ENCODE measurements at regions of chr6 and their contacts with region 1.

Region 1: DNA sequence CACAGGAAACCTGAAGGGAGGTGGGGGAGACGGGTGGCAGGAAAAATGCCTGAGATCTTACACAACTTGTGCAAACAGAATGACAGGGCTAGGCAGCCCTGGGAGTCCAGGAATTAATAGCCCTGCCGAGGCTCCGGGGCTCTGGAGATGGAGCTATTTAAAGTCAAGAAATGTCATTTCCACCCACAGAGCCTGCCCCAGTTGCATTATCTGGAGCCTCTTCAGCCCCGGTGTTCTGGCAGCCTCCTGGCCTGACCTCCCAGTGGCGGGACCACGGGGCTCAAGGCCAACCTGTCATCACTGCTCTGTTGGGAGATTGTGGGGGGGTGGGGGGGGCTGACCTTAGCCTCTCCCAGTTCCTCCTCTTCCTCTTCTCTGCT is 28.5 kb upstream of the SCUBE3 start:
- DNase-seq: peak; percentile 57 to 60
- H3K4me3 ChIP-seq: no peak overlapping the region
- H3K4me3 Mint-ChIP-seq: no peak overlapping the region
- H3K27ac Mint-ChIP-seq: no peak overlapping the region
- H3K4me1 ChIP-seq: peaks cover 25% of the 10 kb centered on the region
- H3K4me1 Mint-ChIP-seq: peaks cover 15% of the 10 kb centered on the region
- H3K27me3 ChIP-seq: no peaks in the 10 kb centered on the region
- H3K27me3 Mint-ChIP-seq: no peaks in the 10 kb centered on the region
- CTCF ChIP-seq: no peak

Region 2: DNA sequence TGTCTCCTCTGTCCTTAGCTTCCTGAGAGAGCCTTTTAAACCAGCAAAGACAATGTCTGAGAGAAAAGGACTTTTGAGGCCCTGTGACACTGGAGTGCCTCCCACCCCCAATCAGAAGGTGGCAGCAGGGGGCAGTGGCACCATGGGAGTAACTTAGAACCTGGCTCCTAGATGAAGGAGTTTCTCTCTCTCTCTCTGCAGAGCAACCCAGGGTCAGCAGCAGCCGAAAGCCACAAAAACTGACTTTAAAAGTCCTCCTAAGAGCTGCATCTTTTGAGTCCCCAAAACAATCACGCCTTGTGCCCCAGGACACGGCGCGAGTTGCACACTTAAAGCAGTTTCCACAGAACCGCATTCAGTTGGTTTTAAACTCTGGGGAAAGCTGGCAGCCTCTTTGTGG is 38.8 kb before region 1 on chr6:
- CTCF ChIA-PET with region 1: no interaction called
- POLR2A ChIA-PET with region 1: no interaction called
- intact Hi-C with region 1: loop called (anchors 5 kb)
- DNase-seq: peak; percentile 60 to 73
- H3K4me3 ChIP-seq: no peak overlapping the region
- H3K4me3 Mint-ChIP-seq: no peak overlapping the region
- H3K27ac Mint-ChIP-seq: no peak overlapping the region
- H3K4me1 ChIP-seq: peaks cover 8% of the 10 kb centered on the region
- H3K4me1 Mint-ChIP-seq: peaks cover 26% of the 10 kb centered on the region
- H3K27me3 ChIP-seq: no peaks in the 10 kb centered on the region
- H3K27me3 Mint-ChIP-seq: no peaks in the 10 kb centered on the region
- CTCF ChIP-seq: peak; percentile 63 to 83

Region 3: GRCh38 chr6:35202066-35202546 is 16.8 kb after region 1 on chr6:
- CTCF ChIA-PET with region 1: interaction called, 10 read pairs
- POLR2A ChIA-PET with region 1: no interaction called
- intact Hi-C with region 1: no loop called
- DNase-seq: no peak
- H3K4me3 ChIP-seq: no peak overlapping the region
- H3K4me3 Mint-ChIP-seq: no peak overlapping the region
- H3K27ac Mint-ChIP-seq: no peak overlapping the region
- H3K4me1 ChIP-seq: peaks cover 7% of the 10 kb centered on the region; the same call in 1 of the 2 replicates
- H3K4me1 Mint-ChIP-seq: peaks cover 14% of the 10 kb centered on the region
- H3K27me3 ChIP-seq: no peaks in the 10 kb centered on the region
- H3K27me3 Mint-ChIP-seq: no peaks in the 10 kb centered on the region
- CTCF ChIP-seq: no peak

Measured in Caco-2 (cell line).